ENCODE measurements at regions of chr5 and their contacts with region 1.

Region 1: DNA sequence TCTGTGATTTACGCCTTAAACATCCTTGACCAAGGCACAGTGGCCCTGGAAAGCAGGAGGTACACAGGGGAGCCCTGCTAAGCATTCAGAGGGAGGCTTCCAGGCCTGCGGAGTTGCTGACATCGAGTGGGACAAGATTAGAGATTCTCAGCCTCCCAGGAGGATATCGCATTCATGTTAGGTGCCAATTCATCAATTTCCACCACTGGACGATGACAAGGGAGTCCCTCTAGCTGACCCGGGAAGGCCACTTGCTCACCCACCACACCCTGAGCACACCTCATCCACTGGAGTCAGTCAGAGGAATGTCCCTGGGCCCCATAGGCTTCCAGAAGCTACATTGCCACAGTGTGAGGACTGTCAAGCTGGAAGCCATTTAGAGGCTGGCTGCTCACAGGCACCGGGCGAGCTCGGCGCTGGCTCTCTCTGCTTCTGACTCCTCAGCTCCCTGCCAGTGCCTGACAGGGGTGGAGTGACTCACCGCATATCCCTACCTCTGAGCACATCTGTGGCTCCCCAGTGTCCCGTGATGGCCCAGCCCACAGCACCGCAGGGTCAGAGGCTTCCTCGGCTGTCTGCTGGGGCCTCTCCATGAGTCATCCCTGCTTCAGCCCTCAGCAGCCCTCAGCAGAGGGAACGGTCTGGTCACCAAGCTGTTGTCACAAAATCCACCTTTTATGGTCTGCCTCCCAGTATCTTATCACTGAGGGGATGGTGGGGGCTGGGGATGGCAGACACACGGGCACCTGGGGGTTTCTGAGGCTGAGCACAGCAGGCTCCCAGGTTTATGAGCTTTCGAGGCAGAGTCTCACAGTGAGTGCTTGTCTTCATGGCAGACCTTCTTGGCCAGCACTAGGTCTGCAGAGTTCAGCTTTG is 117.5 kb downstream of the ZNF608 start:
- DNase-seq: peak; percentile 67

Region 2: GRCh38 chr5:124587280-124587679 is 41.7 kb before region 1 on chr5:
- CTCF ChIA-PET with region 1: no interaction called
- POLR2A ChIA-PET with region 1: no interaction called
- DNase-seq: no peak

Region 3: GRCh38 chr5:124614105-124614504 is 14.9 kb before region 1 on chr5:
- CTCF ChIA-PET with region 1: interaction called, 3 read pairs
- POLR2A ChIA-PET with region 1: interaction called, 13 read pairs
- DNase-seq: no peak

Region 4: DNA sequence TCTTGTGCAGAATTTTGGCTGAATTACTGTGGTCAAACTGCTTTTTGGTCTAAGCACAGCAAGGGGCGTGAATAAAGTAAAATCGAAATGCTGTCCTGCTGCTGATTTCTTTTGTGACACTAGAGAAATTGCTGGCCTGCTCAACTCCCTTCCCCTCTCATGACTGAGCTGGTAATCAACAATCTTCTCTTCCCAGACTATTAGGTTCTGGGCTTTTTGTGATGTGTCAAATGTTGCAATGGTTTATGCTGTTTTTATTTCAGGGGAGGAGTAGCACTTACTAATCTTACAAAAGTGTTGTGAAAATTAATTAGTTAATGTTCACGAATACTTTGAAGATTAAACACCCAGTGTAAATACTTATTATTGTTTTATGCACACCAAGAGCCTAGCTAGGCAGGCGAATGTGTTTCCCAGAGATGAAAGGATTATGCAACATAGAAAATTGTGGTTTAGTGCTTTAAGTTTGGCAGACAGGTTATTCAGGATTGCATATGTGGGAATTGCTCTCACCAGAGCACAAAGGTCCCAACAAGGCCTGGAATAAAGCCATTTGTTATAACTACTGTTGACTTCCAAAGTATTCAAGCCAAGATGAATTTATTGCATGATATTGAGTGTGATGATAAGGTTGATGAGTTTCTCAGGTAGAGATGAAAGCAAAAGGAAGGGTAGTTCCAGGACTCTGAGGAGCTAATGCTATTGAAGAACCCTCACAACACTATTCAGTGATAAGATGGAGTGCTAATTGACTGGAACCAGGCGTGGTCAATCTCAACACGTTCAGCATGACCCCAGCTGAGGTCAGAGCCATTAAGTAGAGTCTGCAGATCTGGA is 398.2 kb after region 1 on chr5:
- CTCF ChIA-PET with region 1: no interaction called
- POLR2A ChIA-PET with region 1: no interaction called
- DNase-seq: no peak

Measured in HEK293T (cell line).